Calu3 (cell line): ENCODE measurements at regions of chr4 and their contacts with region 1.

Region 1: DNA sequence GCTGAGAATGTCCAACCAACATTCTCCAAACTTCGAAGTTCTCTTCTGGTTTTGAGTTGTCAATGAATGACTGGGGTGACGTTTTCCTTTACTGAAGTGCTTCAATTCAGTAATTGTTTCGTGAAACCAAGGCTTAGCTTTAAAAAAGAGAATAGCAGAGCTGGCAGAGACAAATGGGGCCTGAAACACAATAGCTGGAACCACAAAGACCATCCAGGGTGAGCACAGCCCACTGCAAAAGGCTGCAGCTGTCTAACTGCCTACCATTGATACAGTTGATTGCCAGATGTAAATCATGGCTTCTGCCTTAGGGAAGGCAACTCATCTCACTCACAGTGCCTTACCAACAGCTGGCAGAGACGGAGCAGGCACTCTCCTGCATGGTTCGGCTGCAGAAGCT is 78.7 kb upstream of the ZNF518B start:
- DNase-seq: no peak
- H3K4me3 Mint-ChIP-seq: no peak overlapping the region
- H3K27ac Mint-ChIP-seq: no peak overlapping the region
- H3K4me1 Mint-ChIP-seq: no peaks in the 10 kb centered on the region
- H3K27me3 Mint-ChIP-seq: peaks cover 14% of the 10 kb centered on the region
- CTCF ChIP-seq: no peak

Region 2: DNA sequence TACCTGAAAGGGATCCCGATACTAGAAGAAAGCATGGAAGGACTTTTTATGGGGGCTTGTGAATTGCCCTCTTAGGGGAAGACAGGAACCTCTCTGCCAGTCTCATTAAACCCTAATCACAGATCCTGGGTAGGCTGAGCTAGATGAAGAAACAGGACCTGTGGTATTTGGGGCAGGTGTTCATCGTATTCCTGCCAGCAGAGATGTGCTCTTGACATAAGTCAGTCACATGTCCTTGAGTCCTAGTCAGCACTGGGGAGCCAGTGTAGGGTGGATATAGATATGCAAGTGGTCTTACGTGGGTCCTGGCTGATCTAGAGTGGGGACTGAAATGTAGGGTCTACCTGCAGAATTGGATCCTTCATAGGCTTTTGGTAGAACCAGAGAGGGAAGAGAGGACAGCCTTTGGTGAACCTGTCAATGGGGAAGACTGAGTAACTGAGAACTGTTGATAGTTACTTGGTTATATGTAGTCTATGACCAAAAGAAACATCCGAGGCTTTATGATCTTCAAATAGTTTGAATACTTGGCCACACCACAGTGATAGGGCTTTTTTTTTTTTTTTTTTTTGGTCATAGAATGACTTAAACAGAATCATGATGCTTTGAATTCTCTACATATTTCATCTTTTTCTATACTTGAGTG is 355.8 kb before region 1 on chr4:
- CTCF ChIA-PET with region 1: no interaction called
- intact Hi-C with region 1: loop called (anchors 5 kb)
- DNase-seq: no peak
- H3K4me3 Mint-ChIP-seq: no peak overlapping the region
- H3K27ac Mint-ChIP-seq: no peak overlapping the region
- H3K4me1 Mint-ChIP-seq: no peaks in the 10 kb centered on the region
- H3K27me3 Mint-ChIP-seq: peaks cover 45% of the 10 kb centered on the region
- CTCF ChIP-seq: no peak